Activated CD4-positive, alpha-beta memory T cell treated with anti-CD3 and anti-CD28 coated beads for 36 hours (primary cell): ENCODE measurements at regions of chr7 and their contacts with region 1.

Region 1: DNA sequence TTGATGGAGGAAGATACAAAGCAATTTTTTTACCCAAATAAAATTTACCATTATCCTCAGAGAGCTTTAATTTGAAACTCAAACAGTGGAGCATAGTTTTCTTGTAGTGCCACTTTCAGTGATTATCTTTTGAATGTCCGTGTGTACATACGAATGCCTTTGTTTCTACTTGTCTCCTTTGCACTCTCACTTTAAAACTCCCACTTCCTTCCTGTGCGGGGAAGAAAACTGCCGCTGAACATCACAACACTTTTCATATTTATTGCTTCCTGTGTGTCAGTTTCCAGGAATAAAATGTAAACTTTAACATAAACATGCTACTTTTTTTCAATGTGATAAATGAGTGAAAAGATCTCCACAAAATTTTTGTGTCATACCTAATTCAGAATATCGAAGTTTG is 102.4 kb downstream of the SEMA3A start:
- DNase-seq: peak; percentile 18
- H3K4me3 Mint-ChIP-seq: peak overlapping the region; percentile 40
- H3K27ac Mint-ChIP-seq: peak overlapping the region; percentile 70
- H3K4me1 Mint-ChIP-seq: peaks cover 18% of the 10 kb centered on the region
- H3K27me3 Mint-ChIP-seq: no peaks in the 10 kb centered on the region

Region 2: GRCh38 chr7:84073186-84073875 is 18.9 kb before region 1 on chr7:
- CTCF ChIA-PET with region 1: no interaction called
- POLR2A ChIA-PET with region 1: no interaction called
- intact Hi-C with region 1: no loop called
- DNase-seq: no peak
- H3K4me3 Mint-ChIP-seq: no peak overlapping the region
- H3K27ac Mint-ChIP-seq: no peak overlapping the region
- H3K4me1 Mint-ChIP-seq: no peaks in the 10 kb centered on the region
- H3K27me3 Mint-ChIP-seq: no peaks in the 10 kb centered on the region

Region 3: GRCh38 chr7:84194543-84195271 is 102.5 kb after region 1 on chr7 and contains the start of gene SEMA3A:
- CTCF ChIA-PET with region 1: no interaction called
- POLR2A ChIA-PET with region 1: no interaction called
- intact Hi-C with region 1: loop called (anchors 5 kb)
- DNase-seq: peak; percentile 19
- H3K4me3 Mint-ChIP-seq: peak within 1 kb of the TSS; percentile 79
- H3K27ac Mint-ChIP-seq: peak within 1 kb of the TSS; percentile 18
- H3K4me1 Mint-ChIP-seq: peaks cover 22% of the 10 kb centered on the region
- H3K27me3 Mint-ChIP-seq: no peaks in the 10 kb centered on the region
- total RNA-seq, gene SEMA3A: 0.59 to 0.75 TPM